ENCODE measurements at regions of chr12 and their contacts with region 1.

Region 1: GRCh38 chr12:121494093-121494787 is 86.6 kb downstream of the KDM2B start:
- DNase-seq: peak; percentile 74
- ATAC-seq: peak; percentile 54
- H3K4me3 ChIP-seq: no peak overlapping the region
- H3K4me3 Mint-ChIP-seq: no peak overlapping the region
- H3K27ac ChIP-seq: no peak overlapping the region
- H3K27ac Mint-ChIP-seq: peak overlapping the region; percentile 60
- H3K4me1 ChIP-seq: peaks cover 23 to 42% of the 10 kb centered on the region in 2 donors
- H3K4me1 Mint-ChIP-seq: peaks cover 31% of the 10 kb centered on the region
- H3K27me3 ChIP-seq: no peaks in the 10 kb centered on the region
- H3K27me3 Mint-ChIP-seq: no peaks in the 10 kb centered on the region
- CTCF ChIP-seq: peak; percentile 85

Region 2: DNA sequence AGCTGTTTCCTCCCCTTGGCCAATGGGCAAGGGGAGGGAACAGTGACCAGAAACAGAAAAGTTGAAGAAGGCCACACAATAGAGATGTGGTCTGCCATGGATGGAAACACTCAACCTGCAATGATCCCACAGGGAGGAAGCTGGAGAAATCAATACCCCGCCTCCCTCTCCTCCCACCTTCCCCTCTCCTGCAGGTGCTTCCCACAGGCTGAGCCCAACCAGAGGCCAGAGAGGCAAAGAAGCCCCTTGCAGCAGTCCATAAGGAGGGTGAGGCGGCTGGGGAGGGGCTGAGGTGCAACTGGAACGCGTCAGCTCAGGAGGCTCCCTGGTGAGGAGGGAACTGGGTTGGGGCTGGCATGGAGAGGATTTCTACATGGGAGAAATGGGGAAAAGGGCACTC is 10.3 kb before region 1 on chr12:
- CTCF ChIA-PET with region 1: interaction called, 12 read pairs
- POLR2A ChIA-PET with region 1: no interaction called
- intact Hi-C with region 1: no loop called
- DNase-seq: no peak
- ATAC-seq: no peak
- H3K4me3 ChIP-seq: no peak overlapping the region
- H3K4me3 Mint-ChIP-seq: no peak overlapping the region
- H3K27ac ChIP-seq: no peak overlapping the region
- H3K27ac Mint-ChIP-seq: no peak overlapping the region
- H3K4me1 ChIP-seq: no peaks in the 10 kb centered on the region
- H3K4me1 Mint-ChIP-seq: peaks cover 17% of the 10 kb centered on the region
- H3K27me3 ChIP-seq: no peaks in the 10 kb centered on the region
- H3K27me3 Mint-ChIP-seq: no peaks in the 10 kb centered on the region
- CTCF ChIP-seq: no peak

Region 3: GRCh38 chr12:121678716-121679580 is 184.7 kb after region 1 on chr12:
- CTCF ChIA-PET with region 1: interaction called, 19 read pairs
- POLR2A ChIA-PET with region 1: no interaction called
- intact Hi-C with region 1: no loop called
- DNase-seq: no peak
- ATAC-seq: no peak
- H3K4me3 ChIP-seq: no peak overlapping the region
- H3K4me3 Mint-ChIP-seq: no peak overlapping the region
- H3K27ac ChIP-seq: no peak overlapping the region
- H3K27ac Mint-ChIP-seq: peak overlapping the region; percentile 65
- H3K4me1 ChIP-seq: peaks cover 0 to 3% of the 10 kb centered on the region in 2 donors
- H3K4me1 Mint-ChIP-seq: peaks cover 2% of the 10 kb centered on the region
- H3K27me3 ChIP-seq: no peaks in the 10 kb centered on the region
- H3K27me3 Mint-ChIP-seq: no peaks in the 10 kb centered on the region
- CTCF ChIP-seq: no peak

Measured in B cell (primary cell).